Posterior vena cava (tissue), 2 donors: ENCODE measurements at regions of chr13 and their contacts with region 1.

Region 1: GRCh38 chr13:51000571-51001260 is 91.1 kb downstream of the RNASEH2B start:
- DNase-seq: no peak

Region 2: GRCh38 chr13:51070005-51070649 is 69.4 kb after region 1 on chr13:
- intact Hi-C with region 1: loop called in 1 of 2 experiments (anchors 2 kb)
- DNase-seq: peak; percentile 96

Region 3: DNA sequence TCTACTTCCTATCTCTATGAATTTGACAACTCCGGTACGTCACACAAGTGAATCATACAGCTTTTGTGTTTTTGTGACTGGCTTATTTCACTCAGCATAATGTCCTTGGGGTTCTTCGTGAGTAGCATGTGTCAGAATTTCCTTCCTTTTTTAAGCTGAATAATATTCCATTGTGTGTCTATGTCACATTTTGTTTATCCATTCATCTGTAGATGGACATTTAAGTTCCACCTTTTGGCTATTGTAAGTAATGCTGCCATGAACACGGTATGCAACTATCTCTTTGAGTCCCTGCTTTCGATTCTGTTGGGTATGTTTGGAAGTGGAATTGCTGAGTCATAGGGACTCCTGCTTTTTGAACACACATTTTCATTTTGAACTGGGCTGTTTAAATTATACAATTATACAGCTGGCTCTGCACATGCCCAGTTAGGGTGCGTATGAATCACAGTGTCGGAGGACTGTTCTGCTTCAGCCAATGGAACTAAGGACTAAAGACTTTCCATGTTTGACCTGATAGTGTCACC is 153.4 kb after region 1 on chr13:
- intact Hi-C with region 1: no loop called
- DNase-seq: no peak

Region 4: DNA sequence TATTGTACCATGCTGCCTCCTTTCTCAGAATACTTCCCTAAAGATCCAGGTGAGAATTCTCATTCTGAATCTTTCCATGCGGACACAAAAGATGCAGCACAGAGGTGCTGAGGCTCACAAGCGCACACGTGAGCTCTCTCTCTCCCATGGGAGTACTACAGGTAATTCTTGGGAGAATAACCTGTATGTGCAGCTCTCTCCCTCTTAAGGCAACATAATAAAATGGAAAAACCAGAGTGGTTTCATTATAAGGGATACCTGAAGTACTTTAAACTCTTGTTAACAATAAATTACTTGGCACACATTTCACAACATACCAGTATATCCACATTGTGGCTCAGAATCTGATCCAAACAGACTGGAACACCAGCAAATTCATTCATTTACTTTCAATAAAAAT is 411.7 kb after region 1 on chr13:
- intact Hi-C with region 1: no loop called
- DNase-seq: no peak

Region 5: GRCh38 chr13:51781246-51782022 is 780.7 kb after region 1 on chr13:
- intact Hi-C with region 1: loop called in 1 of 2 experiments (anchors 5 kb)
- DNase-seq: no peak